PC-9 (cell line): ENCODE measurements at regions of chr11 and their contacts with region 1.

Region 1: DNA sequence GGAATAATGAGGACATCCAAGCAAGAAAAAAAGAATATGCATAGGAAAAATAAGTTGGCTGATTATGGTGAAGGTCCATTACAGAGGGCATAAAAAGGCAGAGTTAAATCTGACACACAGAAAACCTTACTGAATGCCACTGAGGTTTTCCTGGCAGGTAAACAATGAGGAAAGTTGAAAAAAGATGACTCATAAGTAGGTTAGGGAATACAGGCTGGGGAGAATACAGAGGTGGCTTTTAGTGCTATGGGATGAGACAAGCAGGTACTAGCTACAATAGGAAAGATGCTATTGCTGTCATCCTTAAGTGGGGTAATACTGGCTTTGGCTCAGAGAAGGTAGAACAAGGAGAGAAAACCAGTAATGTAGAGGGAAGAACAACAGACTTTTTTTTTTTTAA is 44.7 kb downstream of the CSTF3 start:
- DNase-seq: peak in 1 of 2 experiments; percentile 67
- H3K4me3 ChIP-seq: no peak overlapping the region
- H3K27ac ChIP-seq: 0 out of 2 replicates have a peak overlapping the region, but pooled peaks have one; percentile 3
- H3K4me1 ChIP-seq: peaks cover 21% of the 10 kb centered on the region
- H3K27me3 ChIP-seq: no peaks in the 10 kb centered on the region
- CTCF ChIP-seq: no peak

Region 2: GRCh38 chr11:33151399-33151798 is 34.9 kb after region 1 on chr11:
- CTCF ChIA-PET with region 1: no interaction called
- POLR2A ChIA-PET with region 1: no interaction called
- intact Hi-C with region 1: loop called (anchors 5 kb)
- DNase-seq: no peak
- H3K4me3 ChIP-seq: no peak overlapping the region
- H3K27ac ChIP-seq: no peak overlapping the region
- H3K4me1 ChIP-seq: peaks cover 24% of the 10 kb centered on the region
- H3K27me3 ChIP-seq: no peaks in the 10 kb centered on the region
- CTCF ChIP-seq: no peak